MCF 10A (cell line): ENCODE measurements at regions of chr3 and their contacts with region 1.

Region 1: GRCh38 chr3:172595641-172596393 is 72.6 kb upstream of the TNFSF10 start:
- DNase-seq: peak; percentile 80
- H3K4me3 Mint-ChIP-seq: peak overlapping the region; percentile 55
- H3K27ac Mint-ChIP-seq: no peak overlapping the region
- H3K4me1 Mint-ChIP-seq: peaks cover 21% of the 10 kb centered on the region
- H3K27me3 Mint-ChIP-seq: no peaks in the 10 kb centered on the region
- CTCF ChIP-seq: peak; percentile 84

Region 2: GRCh38 chr3:172476347-172476746 is 119.5 kb before region 1 on chr3:
- CTCF ChIA-PET with region 1: interaction called, 31 read pairs
- POLR2A ChIA-PET with region 1: no interaction called
- intact Hi-C with region 1: no loop called
- DNase-seq: no peak
- H3K4me3 Mint-ChIP-seq: peak overlapping the region; percentile 90
- H3K27ac Mint-ChIP-seq: no peak overlapping the region
- H3K4me1 Mint-ChIP-seq: no peaks in the 10 kb centered on the region
- H3K27me3 Mint-ChIP-seq: no peaks in the 10 kb centered on the region
- CTCF ChIP-seq: no peak

Region 3: DNA sequence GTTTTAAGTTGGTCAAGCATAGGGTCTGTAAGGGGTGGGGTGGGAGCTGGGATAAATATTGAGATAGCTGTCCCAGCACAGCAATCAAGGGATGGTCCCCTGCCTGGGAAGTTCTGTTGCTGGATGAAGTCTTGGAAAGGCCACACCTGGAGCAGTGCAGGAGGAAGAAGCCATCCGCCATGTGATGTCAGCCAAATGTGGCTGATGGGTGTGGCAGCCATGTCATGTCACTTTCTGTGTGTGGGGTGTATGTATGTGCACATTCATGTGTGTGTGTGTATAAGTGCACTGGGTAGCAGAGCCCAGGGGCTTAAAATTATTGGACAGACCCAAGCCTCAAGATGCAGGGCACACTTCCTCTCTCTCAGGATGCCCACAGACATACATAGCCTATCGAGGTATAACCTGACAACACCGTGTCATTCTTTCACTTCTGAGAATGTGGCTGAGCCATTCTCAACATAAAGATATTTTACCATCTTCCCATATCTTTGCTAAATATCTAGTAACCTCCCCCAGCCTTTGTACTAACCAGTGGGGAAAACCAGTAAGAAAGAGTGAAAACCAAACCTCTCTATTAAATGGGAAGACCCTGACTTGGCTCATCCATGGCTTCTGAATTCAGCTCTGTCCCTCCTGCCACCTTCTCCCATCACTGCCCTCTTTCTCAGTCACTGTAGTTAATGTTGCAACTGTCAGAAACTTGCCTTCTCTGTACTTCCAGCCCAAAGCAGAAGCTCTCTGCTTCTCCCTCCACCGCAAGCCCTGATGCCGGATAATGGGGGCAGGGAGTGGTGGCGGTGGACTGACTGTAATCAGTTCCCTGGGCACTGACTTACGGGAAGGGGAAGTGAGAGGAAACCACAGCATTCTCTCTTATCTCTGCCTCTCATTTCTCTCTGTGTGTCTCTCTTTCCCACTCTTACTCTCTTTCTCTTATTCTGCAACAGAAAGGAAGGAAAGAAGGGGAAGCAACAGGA is 83.7 kb before region 1 on chr3:
- CTCF ChIA-PET with region 1: interaction called, 23 read pairs
- POLR2A ChIA-PET with region 1: interaction called, 24 read pairs
- intact Hi-C with region 1: no loop called
- DNase-seq: no peak
- H3K4me3 Mint-ChIP-seq: no peak overlapping the region
- H3K27ac Mint-ChIP-seq: no peak overlapping the region
- H3K4me1 Mint-ChIP-seq: peaks cover 10% of the 10 kb centered on the region
- H3K27me3 Mint-ChIP-seq: no peaks in the 10 kb centered on the region
- CTCF ChIP-seq: no peak

Region 4: GRCh38 chr3:172550347-172550943 is 45.4 kb before region 1 on chr3:
- CTCF ChIA-PET with region 1: interaction called, 6 read pairs
- POLR2A ChIA-PET with region 1: interaction called, 3 read pairs
- intact Hi-C with region 1: loop called (anchors 1 kb)
- DNase-seq: peak; percentile 95
- H3K4me3 Mint-ChIP-seq: no peak overlapping the region
- H3K27ac Mint-ChIP-seq: peak overlapping the region; percentile 27
- H3K4me1 Mint-ChIP-seq: peaks cover 15% of the 10 kb centered on the region
- H3K27me3 Mint-ChIP-seq: no peaks in the 10 kb centered on the region
- CTCF ChIP-seq: no peak

Region 5: DNA sequence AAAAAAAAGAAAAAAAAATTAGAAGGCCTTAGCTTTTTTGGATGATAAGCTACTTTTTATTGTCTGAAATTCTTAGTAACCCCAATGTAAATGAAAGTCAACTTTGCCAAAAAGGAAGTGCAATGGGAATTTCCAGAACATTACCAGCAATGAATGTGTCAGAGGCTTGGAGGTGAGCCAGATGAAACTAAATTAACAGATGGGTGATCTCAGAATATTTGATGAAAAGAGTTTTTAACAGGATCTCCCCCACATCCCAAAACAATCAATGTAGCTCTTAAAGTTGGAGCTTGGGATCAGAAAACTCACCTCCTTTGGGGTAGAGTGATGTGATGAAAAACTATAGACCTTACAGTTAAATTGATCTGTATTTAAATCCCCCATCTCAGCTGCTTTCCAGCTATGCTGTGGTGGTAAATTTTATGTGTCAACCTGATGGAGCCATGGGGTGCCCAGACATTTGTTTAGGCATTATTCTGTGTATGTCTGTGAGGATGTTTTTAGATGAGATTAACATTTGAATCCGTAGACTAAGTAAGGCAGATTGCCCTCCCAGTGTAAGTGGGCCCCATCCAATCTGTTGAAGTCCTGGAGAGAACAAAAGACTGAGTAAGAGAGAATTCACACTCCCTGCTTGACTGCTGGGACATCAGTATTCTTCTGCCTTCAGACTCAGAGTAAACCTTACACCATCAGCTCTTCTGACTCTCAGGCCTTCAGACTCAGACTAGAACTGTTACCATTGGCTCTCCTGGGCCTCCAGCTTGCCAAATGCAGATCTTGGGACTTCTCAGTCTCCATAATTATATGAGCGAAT is 11.7 kb after region 1 on chr3:
- CTCF ChIA-PET with region 1: interaction called, 35 read pairs
- POLR2A ChIA-PET with region 1: interaction called, 10 read pairs
- intact Hi-C with region 1: no loop called
- DNase-seq: peak; percentile 92
- H3K4me3 Mint-ChIP-seq: no peak overlapping the region
- H3K27ac Mint-ChIP-seq: peak overlapping the region; percentile 39
- H3K4me1 Mint-ChIP-seq: peaks cover 18% of the 10 kb centered on the region
- H3K27me3 Mint-ChIP-seq: no peaks in the 10 kb centered on the region
- CTCF ChIP-seq: no peak

Region 6: GRCh38 chr3:172673210-172673679 is 77.4 kb after region 1 on chr3:
- CTCF ChIA-PET with region 1: interaction called, 42 read pairs
- POLR2A ChIA-PET with region 1: interaction called, 4 read pairs
- intact Hi-C with region 1: no loop called
- DNase-seq: peak; percentile 92
- H3K4me3 Mint-ChIP-seq: no peak overlapping the region
- H3K27ac Mint-ChIP-seq: peak overlapping the region; percentile 39
- H3K4me1 Mint-ChIP-seq: peaks cover 17% of the 10 kb centered on the region
- H3K27me3 Mint-ChIP-seq: no peaks in the 10 kb centered on the region
- CTCF ChIP-seq: peak; percentile 83